ENCODE measurements at regions of chr19 and their contacts with region 1.

Region 1: DNA sequence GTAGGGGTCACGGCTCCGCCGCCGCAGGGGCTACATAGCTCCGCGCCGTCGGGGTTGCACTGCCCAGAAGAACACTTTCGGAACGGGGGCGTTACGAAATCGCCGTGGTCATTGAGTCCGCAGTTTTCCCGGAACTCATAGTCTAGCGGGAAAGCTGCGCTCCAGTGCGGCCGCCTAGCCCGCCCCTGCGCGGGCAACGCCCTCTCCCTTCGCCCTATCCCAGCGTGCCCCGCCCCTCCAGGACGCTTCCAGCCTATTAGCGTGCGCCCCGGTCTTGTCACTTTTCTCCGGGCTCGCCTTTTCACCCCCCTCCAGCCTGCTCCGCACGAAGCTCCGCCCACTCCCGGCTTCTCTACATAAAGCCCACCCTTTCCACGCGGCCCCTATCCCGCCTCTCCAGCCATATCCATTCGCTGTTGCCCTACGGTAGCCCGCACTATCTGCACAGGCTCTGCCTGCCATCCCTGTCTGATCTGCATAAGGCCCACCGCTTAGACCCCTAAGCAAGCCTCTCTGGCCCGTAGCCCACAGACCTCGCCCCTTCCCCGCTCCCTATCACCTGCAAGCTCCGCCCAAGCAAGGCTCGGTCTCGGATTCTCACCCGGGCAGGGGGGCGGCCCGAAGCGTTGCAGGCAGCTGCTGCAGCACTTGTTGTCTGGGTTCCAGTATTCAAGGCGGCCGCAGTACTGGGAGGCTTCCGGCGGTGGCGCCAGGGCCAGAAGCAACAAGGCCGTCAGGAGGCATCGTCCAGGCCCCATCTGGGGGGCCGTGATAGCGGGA is 1.6 kb downstream of the IGFLR1 start:
- DNase-seq: peak; percentile 95
- H3K4me3 Mint-ChIP-seq: peak overlapping the region; percentile 93
- H3K27ac Mint-ChIP-seq: peak overlapping the region; percentile 93
- H3K4me1 Mint-ChIP-seq: peaks cover 23% of the 10 kb centered on the region
- H3K27me3 Mint-ChIP-seq: peaks cover 2% of the 10 kb centered on the region

Region 2: GRCh38 chr19:35154525-35155406 is 585.8 kb before region 1 on chr19 and contains the start of gene FXYD5:
- intact Hi-C with region 1: loop called (anchors 10 kb)
- DNase-seq: peak; percentile 60
- H3K4me3 Mint-ChIP-seq: peak within 1 kb of the TSS; percentile 100
- H3K27ac Mint-ChIP-seq: peak within 1 kb of the TSS; percentile 100
- H3K4me1 Mint-ChIP-seq: peaks cover 54% of the 10 kb centered on the region
- H3K27me3 Mint-ChIP-seq: peaks cover 7% of the 10 kb centered on the region
- total RNA-seq, gene FXYD5: 299 and 309 TPM in 2 replicates

Region 3: DNA sequence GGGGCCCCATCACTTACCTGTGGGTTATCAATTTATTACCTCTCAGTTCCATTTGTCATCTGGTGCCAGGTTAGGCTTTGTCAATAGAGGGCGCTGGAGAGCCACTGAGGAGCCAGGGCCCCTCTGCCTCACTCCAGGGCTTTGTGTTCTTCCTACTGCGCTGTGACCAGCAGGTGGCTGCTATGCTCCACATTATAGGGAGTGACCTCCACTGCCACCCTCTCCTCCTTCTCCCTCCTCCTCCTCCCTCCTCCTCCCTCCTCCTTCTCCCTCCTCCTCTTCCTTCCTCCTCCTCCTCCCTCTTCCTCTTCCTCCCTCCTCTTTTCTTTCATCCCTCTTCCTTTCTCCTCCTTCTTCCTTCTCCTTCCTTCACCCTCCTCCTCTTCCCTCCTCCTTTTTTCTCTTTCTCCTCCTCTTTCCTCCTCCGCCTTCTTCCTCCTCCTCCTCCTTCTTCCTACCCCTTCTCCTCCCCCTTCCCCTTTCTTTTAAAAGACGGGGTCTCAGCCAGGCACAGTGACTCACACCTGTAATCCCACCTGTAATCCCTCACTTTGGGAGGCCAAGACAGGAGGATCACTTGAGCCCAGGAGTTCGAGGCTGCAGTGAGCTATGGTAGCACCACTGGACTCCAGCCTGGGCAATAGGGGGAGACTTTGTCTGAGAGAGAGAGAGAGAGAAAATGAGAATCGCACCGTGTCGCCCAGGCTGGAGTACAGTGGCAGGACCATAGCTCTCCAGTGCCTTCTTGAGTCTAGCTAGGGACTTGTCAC is 46.6 kb before region 1 on chr19:
- intact Hi-C with region 1: loop called (anchors 1 kb)
- DNase-seq: peak; percentile 86
- H3K4me3 Mint-ChIP-seq: no peak overlapping the region
- H3K27ac Mint-ChIP-seq: peak overlapping the region; percentile 38
- H3K4me1 Mint-ChIP-seq: peaks cover 27% of the 10 kb centered on the region
- H3K27me3 Mint-ChIP-seq: no peaks in the 10 kb centered on the region

Region 4: GRCh38 chr19:35757749-35758608 is 17.4 kb after region 1 on chr19 and contains the start of gene PROSER3:
- intact Hi-C with region 1: loop called (anchors 1 kb)
- DNase-seq: peak; percentile 99
- H3K4me3 Mint-ChIP-seq: peak within 1 kb of the TSS; percentile 89
- H3K27ac Mint-ChIP-seq: peak within 1 kb of the TSS; percentile 90
- H3K4me1 Mint-ChIP-seq: peaks cover 29% of the 10 kb centered on the region
- H3K27me3 Mint-ChIP-seq: no peaks in the 10 kb centered on the region
- total RNA-seq, gene PROSER3: 39.5 and 45.1 TPM in 2 replicates

Region 5: DNA sequence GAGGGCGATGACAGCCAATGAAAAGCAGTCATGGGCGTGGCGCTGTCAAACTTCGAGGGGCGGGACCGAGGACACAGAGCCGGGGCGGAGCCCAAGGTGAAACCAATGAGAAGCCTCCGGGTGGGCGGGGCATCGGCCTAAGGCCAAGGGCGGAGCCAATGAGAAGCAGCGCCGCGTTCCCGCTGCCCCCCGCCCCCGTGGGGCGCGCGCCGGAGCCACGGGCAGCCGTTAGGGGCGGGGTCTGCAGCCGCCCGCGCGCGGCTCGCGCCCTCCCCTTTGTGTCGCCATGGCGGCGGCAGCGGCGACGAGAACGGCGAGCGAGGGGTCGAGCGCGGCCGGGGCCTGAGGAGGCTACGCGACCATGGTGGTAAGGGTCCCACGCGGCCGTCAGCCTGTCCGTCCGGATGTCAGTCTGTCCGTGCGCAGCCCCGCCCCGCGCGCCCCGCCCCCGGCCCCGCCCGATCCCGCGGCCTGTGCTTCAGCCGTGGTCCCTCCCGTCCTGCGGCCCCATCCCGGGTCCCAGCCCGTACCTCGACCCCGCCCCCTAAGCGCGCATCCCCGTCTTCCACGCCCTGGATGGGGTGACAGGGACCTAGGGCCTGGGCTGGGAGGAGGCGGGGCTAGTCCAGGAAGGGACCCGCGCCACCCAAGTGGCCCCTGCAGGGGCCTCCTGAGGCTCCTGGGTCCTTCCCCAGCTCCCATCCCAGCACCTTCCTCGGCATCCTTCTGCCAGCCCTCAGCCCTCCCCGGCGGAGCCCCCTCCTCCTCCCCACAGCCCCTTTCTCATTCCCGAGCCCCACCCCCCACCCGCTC is 34.9 kb after region 1 on chr19 and contains the start of gene ARHGAP33:
- intact Hi-C with region 1: loop called (anchors 1 kb)
- DNase-seq: peak; percentile 99
- H3K4me3 Mint-ChIP-seq: peak within 1 kb of the TSS; percentile 85
- H3K27ac Mint-ChIP-seq: peak within 1 kb of the TSS; percentile 61
- H3K4me1 Mint-ChIP-seq: peaks cover 29% of the 10 kb centered on the region
- H3K27me3 Mint-ChIP-seq: no peaks in the 10 kb centered on the region
- total RNA-seq, gene ARHGAP33: 24.5 and 25.8 TPM in 2 replicates

Region 6: GRCh38 chr19:35869327-35870123 is 128.9 kb after region 1 on chr19:
- intact Hi-C with region 1: loop called (anchors 2 kb)
- DNase-seq: peak; percentile 85
- H3K4me3 Mint-ChIP-seq: peak overlapping the region; percentile 81
- H3K27ac Mint-ChIP-seq: peak overlapping the region; percentile 42
- H3K4me1 Mint-ChIP-seq: peaks cover 23% of the 10 kb centered on the region
- H3K27me3 Mint-ChIP-seq: peaks cover 26% of the 10 kb centered on the region

Region 7: GRCh38 chr19:35931161-35931873 is 190.7 kb after region 1 on chr19:
- intact Hi-C with region 1: loop called (anchors 1 kb)
- DNase-seq: peak; percentile 100
- H3K4me3 Mint-ChIP-seq: peak overlapping the region; percentile 70
- H3K27ac Mint-ChIP-seq: peak overlapping the region; percentile 81
- H3K4me1 Mint-ChIP-seq: peaks cover 30% of the 10 kb centered on the region
- H3K27me3 Mint-ChIP-seq: no peaks in the 10 kb centered on the region

Measured in activated T-helper 1 cell treated with anti-CD3 and anti-CD28 coated beads, Interleukin-12 subunit alpha, Interleukin-12 subunit beta, Interleukin-2, Interleukin-4 antibody, amounts not matched to agents 30 ng/mL and 10 ng/mL and 1 ng/mL, durations not matched to agents 14 hours and 24 hours and 36 hours (primary cell).